AG04449 (cell line): ENCODE measurements at regions of chr1 and their contacts with region 1.

Region 1: GRCh38 chr1:25819576-25820246 is at the start of gene MTFR1L:
- DNase-seq: no peak
- H3K4me3 ChIP-seq: peak within 1 kb of the TSS; percentile 91
- CTCF ChIP-seq: no peak

Region 2: DNA sequence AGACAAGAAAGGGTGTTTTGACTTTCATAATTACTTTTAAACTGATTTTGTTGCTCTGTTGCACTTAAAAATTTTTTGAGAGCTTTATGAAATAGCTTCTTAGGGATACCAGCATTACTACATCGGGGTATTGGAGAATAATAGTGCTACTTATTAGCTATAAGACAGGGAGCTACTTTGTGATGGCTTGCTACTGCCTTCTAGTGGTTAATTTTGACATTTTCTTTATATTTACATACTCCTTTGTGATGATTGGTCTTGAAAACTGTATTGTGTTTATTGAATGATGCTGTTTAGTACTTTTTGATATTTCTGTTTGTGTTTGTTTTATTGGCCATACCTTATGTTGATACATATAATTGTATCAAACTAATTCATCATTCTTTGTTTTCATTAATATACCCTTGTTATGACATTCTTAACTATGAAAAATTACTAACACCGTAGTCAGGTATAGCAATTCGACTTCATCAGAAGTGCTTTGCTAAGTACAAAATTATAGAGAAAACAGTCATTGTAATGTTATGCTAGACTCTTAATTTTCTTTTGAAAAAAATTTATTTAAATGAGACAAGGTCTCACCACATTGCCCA is 988.9 kb before region 1 on chr1:
- CTCF ChIA-PET with region 1: no interaction called
- POLR2A ChIA-PET with region 1: no interaction called
- DNase-seq: no peak
- H3K4me3 ChIP-seq: no peak overlapping the region
- CTCF ChIP-seq: peak; percentile 53

Region 3: DNA sequence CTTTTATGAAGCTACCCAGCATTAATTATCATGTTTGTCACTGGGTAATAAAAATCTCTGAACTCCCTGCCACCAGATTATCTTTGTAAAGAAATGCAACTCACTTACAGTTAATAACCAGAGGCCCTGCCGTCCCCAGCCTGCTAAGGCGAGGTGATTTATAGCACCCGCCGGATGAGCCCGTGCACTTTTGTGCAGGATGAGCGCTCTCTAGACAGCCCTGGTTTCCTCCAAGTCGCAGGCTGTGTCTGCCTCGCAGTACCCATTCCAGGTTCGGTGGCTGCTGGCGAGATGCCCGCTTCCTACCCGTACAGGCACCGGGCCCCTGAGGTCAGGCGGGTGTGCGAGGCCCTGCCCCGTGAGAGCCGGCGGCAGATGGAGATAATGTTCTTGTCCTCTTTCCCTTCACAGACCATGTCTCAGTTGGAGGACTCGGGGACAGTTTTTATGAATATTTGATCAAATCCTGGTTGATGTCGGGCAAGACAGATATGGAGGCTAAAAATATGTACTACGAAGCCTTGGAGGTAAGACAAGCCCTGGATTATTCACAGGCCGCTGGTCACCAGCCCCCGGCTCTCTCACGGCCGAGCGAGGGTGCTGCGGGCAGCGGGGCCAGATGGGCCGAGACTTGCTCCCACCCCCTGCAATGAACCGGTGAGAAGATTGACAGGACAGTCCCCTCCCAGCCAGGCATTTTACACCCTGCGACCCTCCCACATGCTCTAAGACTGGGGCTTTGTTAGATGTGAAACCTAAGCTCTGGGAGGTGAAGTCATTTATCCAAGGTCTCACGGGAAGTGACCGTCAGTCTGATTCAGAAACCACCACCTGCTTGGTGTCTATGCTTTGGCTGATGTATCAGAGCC is 48.2 kb before region 1 on chr1:
- CTCF ChIA-PET with region 1: no interaction called
- POLR2A ChIA-PET with region 1: no interaction called
- DNase-seq: no peak
- H3K4me3 ChIP-seq: no peak overlapping the region
- CTCF ChIP-seq: no peak

Region 4: DNA sequence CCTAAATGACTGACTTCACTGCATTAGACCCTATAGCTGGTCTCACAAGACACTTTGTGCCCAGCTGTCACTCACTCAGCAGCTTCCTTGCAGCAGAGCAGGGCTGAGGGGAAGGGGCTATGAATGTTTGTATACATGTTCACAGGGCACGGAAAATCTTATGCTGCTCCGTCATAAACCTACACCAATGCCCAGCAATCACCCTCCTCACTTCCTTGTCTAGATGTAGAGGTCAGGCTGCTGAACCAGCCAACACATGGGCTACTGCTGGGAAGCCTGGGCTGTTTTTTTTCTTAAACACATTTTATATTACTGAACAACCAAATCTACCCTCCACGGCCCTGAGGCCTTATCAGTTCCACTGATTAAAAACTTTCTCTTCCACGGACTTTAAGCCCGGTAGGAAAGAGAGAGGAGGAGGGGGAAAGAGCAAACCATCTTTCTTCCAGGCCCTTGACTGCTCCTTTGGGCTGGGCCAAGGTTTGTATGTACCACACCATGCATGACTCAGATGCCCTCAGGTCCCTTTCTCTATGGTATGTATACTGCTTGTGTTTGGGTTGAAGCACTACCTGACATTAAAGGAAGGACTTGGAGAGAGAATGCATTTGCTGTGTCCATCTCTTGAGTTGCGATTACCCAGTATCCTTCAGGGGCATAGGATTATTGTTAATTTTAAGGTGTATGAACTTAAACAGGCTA is 12.8 kb after region 1 on chr1:
- CTCF ChIA-PET with region 1: interaction called, 17 read pairs
- POLR2A ChIA-PET with region 1: interaction called, 3 read pairs
- DNase-seq: no peak
- H3K4me3 ChIP-seq: no peak overlapping the region
- CTCF ChIP-seq: no peak

Region 5: DNA sequence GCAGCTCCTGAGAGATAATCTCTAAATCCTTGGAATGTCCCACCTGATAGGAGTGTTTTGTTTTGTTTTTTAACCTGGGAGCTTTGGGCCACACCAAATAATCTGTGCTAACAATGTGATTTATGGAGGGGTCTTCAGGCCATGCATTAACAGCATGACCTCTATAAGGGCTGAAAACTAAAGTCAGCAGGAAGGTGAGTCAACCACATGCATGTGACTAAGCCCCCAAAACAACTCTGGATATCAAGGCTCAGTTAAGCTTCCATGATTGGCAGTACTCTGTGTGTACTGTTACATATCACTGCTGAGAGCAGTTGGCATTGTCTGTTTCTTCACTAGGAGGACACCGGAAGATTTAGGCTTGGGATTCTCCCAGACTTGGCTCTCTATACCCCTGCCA is 28.8 kb after region 1 on chr1:
- CTCF ChIA-PET with region 1: no interaction called
- POLR2A ChIA-PET with region 1: no interaction called
- DNase-seq: no peak
- H3K4me3 ChIP-seq: no peak overlapping the region
- CTCF ChIP-seq: no peak